CD4-positive, alpha-beta memory T cell (primary cell): ENCODE measurements at regions of chr3 and their contacts with region 1.

Region 1: GRCh38 chr3:16511681-16512434 is 1.6 kb downstream of the RFTN1 start:
- DNase-seq: peak; percentile 81 to 92 (median 85)
- H3K4me3 ChIP-seq: peak overlapping the region; percentile 70 to 80
- H3K4me3 Mint-ChIP-seq: peak overlapping the region; percentile 91 to 98 (median 96)
- H3K27ac ChIP-seq: peak overlapping the region; percentile 73
- H3K27ac Mint-ChIP-seq: peak overlapping the region; percentile 93 to 98 (median 96)
- H3K4me1 ChIP-seq: peaks cover 86% of the 10 kb centered on the region
- H3K4me1 Mint-ChIP-seq: peaks cover 57 to 89% (median 73%) of the 10 kb centered on the region in 4 donors
- H3K27me3 ChIP-seq: no peaks in the 10 kb centered on the region
- H3K27me3 Mint-ChIP-seq: no peaks in the 10 kb centered on the region

Region 2: GRCh38 chr3:15933439-15934139 is 578.3 kb before region 1 on chr3:
- CTCF ChIA-PET with region 1: no interaction called
- POLR2A ChIA-PET with region 1: no interaction called
- intact Hi-C with region 1: no loop called
- DNase-seq: no peak
- H3K4me3 ChIP-seq: no peak overlapping the region
- H3K4me3 Mint-ChIP-seq: no peak overlapping the region
- H3K27ac ChIP-seq: no peak overlapping the region
- H3K27ac Mint-ChIP-seq: no peak overlapping the region
- H3K4me1 ChIP-seq: no peaks in the 10 kb centered on the region
- H3K4me1 Mint-ChIP-seq: no peaks in the 10 kb centered on the region
- H3K27me3 ChIP-seq: no peaks in the 10 kb centered on the region
- H3K27me3 Mint-ChIP-seq: peaks cover 0 to 4% of the 10 kb centered on the region in 2 donors

Region 3: DNA sequence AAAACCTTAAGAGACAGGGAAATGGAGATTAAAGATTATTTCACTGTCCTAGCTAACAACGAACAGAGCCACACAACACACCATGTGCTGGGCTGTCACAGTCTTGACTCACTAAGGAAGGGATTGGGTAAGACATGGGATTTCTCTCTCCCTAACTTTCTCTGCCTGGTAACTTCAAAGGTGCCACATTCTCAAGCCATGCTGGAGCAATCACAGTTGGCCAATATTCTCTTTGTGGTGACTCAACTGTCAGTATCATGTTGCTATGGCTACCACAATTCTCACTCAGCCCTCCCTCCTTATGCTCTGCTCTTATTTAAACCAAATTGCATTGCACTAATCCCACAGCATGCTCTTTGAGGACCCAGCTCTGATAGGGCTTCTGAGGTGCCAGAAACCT is 172.9 kb before region 1 on chr3:
- CTCF ChIA-PET with region 1: interaction called, 4 read pairs
- POLR2A ChIA-PET with region 1: interaction called, 12 read pairs
- intact Hi-C with region 1: loop called (anchors 2 kb)
- DNase-seq: peak; percentile 22 to 60 (median 28)
- H3K4me3 ChIP-seq: no peak overlapping the region
- H3K4me3 Mint-ChIP-seq: peak overlapping the region in 4 of 8 donors; percentile 58 to 71 (median 62)
- H3K27ac ChIP-seq: peak overlapping the region; percentile 23
- H3K27ac Mint-ChIP-seq: peak overlapping the region; percentile 71 to 94 (median 86)
- H3K4me1 ChIP-seq: peaks cover 48% of the 10 kb centered on the region
- H3K4me1 Mint-ChIP-seq: peaks cover 44 to 81% (median 63%) of the 10 kb centered on the region in 4 donors
- H3K27me3 ChIP-seq: no peaks in the 10 kb centered on the region
- H3K27me3 Mint-ChIP-seq: no peaks in the 10 kb centered on the region

Region 4: DNA sequence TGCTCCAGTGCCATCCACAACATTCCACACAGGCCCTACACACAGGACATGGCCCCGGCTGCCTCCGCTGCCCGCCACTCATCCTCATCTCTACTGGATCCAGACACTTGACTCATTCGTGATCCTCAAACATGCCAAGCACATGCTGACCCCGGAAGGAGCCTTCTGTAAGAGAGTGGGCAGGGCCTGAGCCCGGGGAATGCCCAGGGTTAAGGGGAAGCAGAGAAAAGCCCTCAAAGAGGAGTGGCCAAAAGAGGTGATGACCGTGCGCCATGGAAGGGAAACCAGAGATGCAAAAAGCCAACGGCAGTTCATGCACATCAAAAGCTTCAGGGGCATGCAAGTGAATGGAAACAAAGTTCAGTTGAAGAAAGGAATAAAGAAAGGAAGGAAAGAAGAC is 44.5 kb before region 1 on chr3:
- CTCF ChIA-PET with region 1: interaction called, 3 read pairs
- POLR2A ChIA-PET with region 1: interaction called, 6 read pairs
- intact Hi-C with region 1: loop called (anchors 1 kb)
- DNase-seq: peak in 4 of 5 donors; percentile 16 to 76 (median 34)
- H3K4me3 ChIP-seq: no peak overlapping the region
- H3K4me3 Mint-ChIP-seq: peak overlapping the region in 7 of 8 donors; percentile 26 to 84 (median 71)
- H3K27ac ChIP-seq: no peak overlapping the region
- H3K27ac Mint-ChIP-seq: peak overlapping the region; percentile 73 to 98 (median 94)
- H3K4me1 ChIP-seq: peaks cover 43% of the 10 kb centered on the region
- H3K4me1 Mint-ChIP-seq: peaks cover 43 to 66% (median 57%) of the 10 kb centered on the region in 4 donors
- H3K27me3 ChIP-seq: no peaks in the 10 kb centered on the region
- H3K27me3 Mint-ChIP-seq: no peaks in the 10 kb centered on the region

Region 5: DNA sequence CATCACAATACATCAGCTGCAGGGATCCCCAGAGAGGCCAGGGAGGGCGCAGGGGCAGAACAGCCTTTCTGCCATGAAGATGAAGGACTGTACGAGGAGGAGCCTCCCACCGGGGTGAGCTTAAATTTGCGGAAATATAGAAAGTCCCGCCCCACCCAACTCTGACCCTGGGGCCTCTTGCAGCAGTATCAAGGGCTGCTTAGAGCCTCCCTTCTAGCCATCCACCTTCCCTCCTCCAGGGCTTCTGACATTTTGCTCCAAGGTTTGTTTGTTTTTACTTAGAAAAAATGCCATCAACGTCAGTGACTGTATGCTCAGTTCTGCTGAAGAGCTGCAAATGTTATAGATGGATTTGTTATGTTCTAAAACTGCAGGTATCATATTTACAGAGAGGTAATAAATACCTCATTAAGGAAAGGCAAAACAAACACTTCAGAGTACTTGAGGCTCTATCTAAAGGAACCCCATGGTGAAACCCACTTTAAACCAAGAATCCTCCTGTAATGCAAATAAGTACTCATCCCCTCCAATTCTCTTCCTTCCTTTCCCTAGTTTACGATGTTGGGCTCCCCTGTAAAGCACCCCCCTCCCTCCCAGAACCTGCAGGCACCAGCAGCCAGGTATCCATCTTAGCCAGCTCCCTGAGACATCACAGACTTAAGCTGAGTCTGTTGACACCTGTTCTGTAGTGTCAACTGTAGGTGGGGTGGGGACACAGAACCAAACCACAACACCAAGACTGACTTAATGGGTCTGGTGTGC is 28.9 kb before region 1 on chr3:
- CTCF ChIA-PET with region 1: interaction called, 26 read pairs
- POLR2A ChIA-PET with region 1: interaction called, 51 read pairs
- intact Hi-C with region 1: loop called (anchors 1 kb)
- DNase-seq: peak in 4 of 5 donors; percentile 22 to 58 (median 30)
- H3K4me3 ChIP-seq: peak overlapping the region in 1 of 2 donors; percentile 10
- H3K4me3 Mint-ChIP-seq: peak overlapping the region; percentile 7 to 81 (median 69)
- H3K27ac ChIP-seq: peak overlapping the region; percentile 48
- H3K27ac Mint-ChIP-seq: peak overlapping the region; percentile 85 to 95 (median 89)
- H3K4me1 ChIP-seq: peaks cover 52% of the 10 kb centered on the region
- H3K4me1 Mint-ChIP-seq: peaks cover 50 to 83% (median 64%) of the 10 kb centered on the region in 4 donors
- H3K27me3 ChIP-seq: no peaks in the 10 kb centered on the region
- H3K27me3 Mint-ChIP-seq: no peaks in the 10 kb centered on the region